Naive thymus-derived CD4-positive, alpha-beta T cell (primary cell): ENCODE measurements at regions of chr1 and their contacts with region 1.

Region 1: DNA sequence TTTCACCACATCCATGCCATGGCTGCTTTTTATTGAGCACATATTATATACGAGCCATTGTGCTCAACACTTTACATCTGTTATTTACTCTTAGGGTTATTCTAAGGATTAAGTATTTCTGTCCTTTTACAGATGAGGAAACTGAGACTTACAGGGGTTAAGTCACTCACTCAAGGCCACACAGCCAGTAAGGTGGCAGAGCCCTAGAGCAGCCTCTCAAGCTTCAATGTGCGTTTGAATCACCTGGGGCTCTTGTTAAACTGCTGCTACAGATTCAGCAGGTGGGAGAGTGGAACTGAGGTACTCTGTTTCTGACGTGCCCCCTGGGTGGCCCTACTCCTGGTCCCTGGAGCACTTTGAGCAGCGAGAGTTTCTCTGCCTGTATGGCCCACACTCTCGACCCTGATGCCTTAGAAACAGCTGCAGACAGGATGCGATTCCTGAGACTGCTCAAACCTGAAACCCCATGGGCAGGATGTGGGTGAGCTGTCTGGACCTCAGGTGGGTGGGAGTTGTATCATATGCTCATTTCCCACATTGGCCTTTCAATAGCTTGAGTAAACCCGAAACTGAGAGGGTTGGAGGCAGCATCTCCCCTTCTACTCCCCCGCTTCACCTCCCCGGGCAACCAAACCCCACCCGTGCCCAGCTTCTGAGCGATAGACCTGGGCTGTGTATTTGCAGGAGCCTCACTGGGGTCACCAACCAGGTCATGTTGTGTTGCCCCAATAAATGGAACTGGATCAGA is 59.3 kb downstream of the MAN1C1 start:
- DNase-seq: peak; percentile 24 to 91 (median 86)
- ATAC-seq: peak; percentile 89
- H3K4me3 ChIP-seq: peak overlapping the region; percentile 31
- H3K4me3 Mint-ChIP-seq: peak overlapping the region; percentile 80 to 92 (median 84)
- H3K27ac ChIP-seq: peak overlapping the region; percentile 67
- H3K27ac Mint-ChIP-seq: peak overlapping the region; percentile 70 to 98 (median 94)
- H3K4me1 ChIP-seq: peaks cover 34 to 89% of the 10 kb centered on the region in 2 donors
- H3K4me1 Mint-ChIP-seq: peaks cover 58 to 96% (median 94%) of the 10 kb centered on the region in 7 donors
- H3K27me3 ChIP-seq: no peaks in the 10 kb centered on the region
- H3K27me3 Mint-ChIP-seq: peaks cover 0 to 80% (median 0%) of the 10 kb centered on the region in 5 donors

Region 2: DNA sequence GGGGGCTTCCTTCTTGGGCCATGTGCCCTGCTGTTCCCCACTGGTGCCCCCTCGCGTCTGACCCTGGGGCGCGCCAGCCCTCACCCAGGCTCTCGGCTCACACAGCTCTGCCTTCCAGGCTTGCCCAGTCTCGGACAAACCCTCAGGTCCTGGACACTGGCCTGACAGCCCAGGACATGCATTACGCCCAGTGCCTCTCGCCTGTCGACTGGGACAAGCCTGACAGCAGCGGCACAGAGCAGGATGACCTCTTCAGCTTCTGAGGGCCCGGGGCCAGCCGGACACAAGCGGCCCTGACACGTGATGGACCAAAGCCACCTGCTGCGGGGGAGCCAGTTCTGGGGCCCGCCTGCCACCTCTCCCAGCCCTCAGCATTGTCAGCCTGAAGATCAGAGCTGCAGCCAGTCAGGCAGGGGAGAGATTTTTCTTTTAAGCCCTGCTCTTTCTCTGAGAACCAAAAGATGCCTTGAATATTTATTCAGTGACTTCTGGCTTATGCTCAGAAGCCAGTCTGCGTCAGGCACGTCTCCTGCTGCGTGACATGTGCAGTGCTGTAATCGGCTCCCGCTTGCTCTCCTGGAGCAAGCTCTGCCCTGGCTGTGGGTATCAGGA is 109.1 kb before region 1 on chr1:
- CTCF ChIA-PET with region 1: no interaction called
- POLR2A ChIA-PET with region 1: interaction called, 3 read pairs
- intact Hi-C with region 1: loop called in 1 of 2 experiments (anchors 1 kb)
- DNase-seq: peak in 4 of 9 donors; percentile 28 to 73 (median 50)
- ATAC-seq: peak; percentile 60
- H3K4me3 ChIP-seq: no peak overlapping the region
- H3K4me3 Mint-ChIP-seq: peak overlapping the region; percentile 74 to 100 (median 98)
- H3K27ac ChIP-seq: peak overlapping the region; percentile 83
- H3K27ac Mint-ChIP-seq: peak overlapping the region; percentile 72 to 98 (median 96)
- H3K4me1 ChIP-seq: peaks cover 39 to 40% of the 10 kb centered on the region in 2 donors
- H3K4me1 Mint-ChIP-seq: peaks cover 40 to 80% (median 68%) of the 10 kb centered on the region in 7 donors
- H3K27me3 ChIP-seq: no peaks in the 10 kb centered on the region
- H3K27me3 Mint-ChIP-seq: no peaks in the 10 kb centered on the region

Region 3: GRCh38 chr1:25642574-25643108 is 33.3 kb before region 1 on chr1:
- CTCF ChIA-PET with region 1: interaction called, 9 read pairs
- POLR2A ChIA-PET with region 1: interaction called, 37 read pairs
- intact Hi-C with region 1: loop called (anchors 1 kb)
- DNase-seq: peak; percentile 29 to 88 (median 84)
- ATAC-seq: peak; percentile 96
- H3K4me3 ChIP-seq: peak overlapping the region; percentile 53
- H3K4me3 Mint-ChIP-seq: peak overlapping the region; percentile 43 to 89 (median 72)
- H3K27ac ChIP-seq: peak overlapping the region; percentile 77
- H3K27ac Mint-ChIP-seq: peak overlapping the region; percentile 81 to 96 (median 92)
- H3K4me1 ChIP-seq: peaks cover 20 to 65% of the 10 kb centered on the region in 2 donors
- H3K4me1 Mint-ChIP-seq: peaks cover 54 to 96% (median 92%) of the 10 kb centered on the region in 7 donors
- H3K27me3 ChIP-seq: no peaks in the 10 kb centered on the region
- H3K27me3 Mint-ChIP-seq: peaks cover 0 to 85% (median 0%) of the 10 kb centered on the region in 5 donors

Region 4: DNA sequence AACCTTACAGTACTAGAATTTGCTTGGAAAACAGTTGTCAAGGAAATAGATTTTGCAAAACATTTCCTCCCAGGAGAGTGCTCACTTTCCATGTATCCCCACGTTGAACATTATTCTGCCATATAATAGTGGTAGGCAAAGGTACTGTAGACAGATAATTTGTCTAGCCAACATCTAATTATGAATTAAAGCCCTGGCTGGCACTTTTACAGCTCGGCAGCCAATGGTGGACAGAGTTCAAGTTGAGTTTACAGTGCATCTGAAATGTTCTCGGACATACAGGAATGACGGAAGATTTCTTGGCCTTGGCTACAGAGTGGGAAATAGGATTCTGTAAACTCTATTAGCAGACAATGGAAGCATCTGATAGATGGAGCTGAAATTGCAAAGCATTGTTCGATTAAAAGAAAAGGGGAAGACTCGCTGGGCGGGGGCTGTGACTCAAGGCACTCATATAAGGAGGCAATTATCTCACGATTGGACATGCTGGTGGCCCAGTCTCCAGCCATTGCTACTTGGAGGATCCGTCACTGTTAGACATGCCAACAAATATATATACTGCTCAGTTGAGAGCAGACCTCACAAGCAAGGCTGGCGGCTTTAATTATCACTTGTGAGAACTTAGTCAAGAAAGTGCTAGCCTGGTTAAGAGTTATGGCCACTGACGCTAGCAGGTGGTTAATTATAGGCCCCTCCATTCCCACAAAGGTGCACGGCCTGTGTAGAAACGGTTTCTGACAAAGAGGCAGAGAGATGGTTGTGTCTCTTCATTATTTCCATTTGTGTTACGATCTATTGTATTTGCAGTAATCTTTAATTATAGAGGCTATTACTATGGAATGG is 11.3 kb before region 1 on chr1:
- CTCF ChIA-PET with region 1: interaction called, 11 read pairs
- POLR2A ChIA-PET with region 1: interaction called, 30 read pairs
- intact Hi-C with region 1: loop called in 1 of 2 experiments (anchors 1 kb)
- DNase-seq: no peak
- ATAC-seq: no peak
- H3K4me3 ChIP-seq: no peak overlapping the region
- H3K4me3 Mint-ChIP-seq: no peak overlapping the region
- H3K27ac ChIP-seq: peak overlapping the region; percentile 39
- H3K27ac Mint-ChIP-seq: peak overlapping the region in 8 of 9 donors; percentile 43 to 98 (median 96)
- H3K4me1 ChIP-seq: peaks cover 0 to 41% of the 10 kb centered on the region in 2 donors
- H3K4me1 Mint-ChIP-seq: peaks cover 23 to 89% (median 85%) of the 10 kb centered on the region in 7 donors
- H3K27me3 ChIP-seq: no peaks in the 10 kb centered on the region
- H3K27me3 Mint-ChIP-seq: peaks cover 0 to 69% (median 0%) of the 10 kb centered on the region in 5 donors

Region 5: DNA sequence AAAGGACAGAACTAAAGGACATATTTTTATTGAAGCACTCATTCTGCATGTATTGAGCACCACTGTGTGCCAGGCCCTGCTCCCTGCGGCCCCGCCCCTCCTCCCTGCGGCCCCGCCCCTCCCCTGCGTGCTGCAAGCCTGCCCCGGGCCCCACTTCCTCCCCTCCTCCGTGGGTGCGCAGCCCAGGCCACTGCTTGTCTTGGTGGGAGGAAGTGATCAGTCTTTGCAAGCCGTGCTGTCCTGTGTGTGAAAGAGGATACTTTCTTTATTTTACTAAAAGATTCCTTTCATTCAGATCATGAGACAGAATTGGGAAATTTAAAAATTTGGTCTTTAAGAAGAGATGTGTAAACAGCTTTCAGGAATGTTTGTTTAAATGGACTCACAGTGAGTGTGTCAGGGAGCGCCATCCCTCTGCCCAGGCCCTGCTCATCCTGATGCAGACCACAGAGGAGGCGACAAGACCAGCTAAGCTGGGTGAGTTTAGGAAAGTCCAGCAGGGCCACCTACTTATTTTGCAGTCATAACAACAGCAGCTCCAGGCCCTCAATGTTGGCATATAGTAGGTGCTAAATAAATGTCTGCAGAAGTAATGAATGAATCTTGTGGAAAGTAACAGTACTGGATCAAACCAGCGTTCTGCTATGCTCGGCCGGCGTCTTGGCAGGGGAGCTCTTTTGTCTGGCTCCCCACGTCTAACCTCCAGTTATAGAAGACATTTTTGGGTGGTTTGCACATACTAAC is 35.8 kb after region 1 on chr1:
- CTCF ChIA-PET with region 1: interaction called, 3 read pairs
- POLR2A ChIA-PET with region 1: interaction called, 7 read pairs
- intact Hi-C with region 1: loop called (anchors 2 to 5 kb)
- DNase-seq: peak in 7 of 9 donors; percentile 32 to 55 (median 49)
- ATAC-seq: peak; percentile 93
- H3K4me3 ChIP-seq: no peak overlapping the region
- H3K4me3 Mint-ChIP-seq: peak overlapping the region; percentile 20 to 76 (median 72)
- H3K27ac ChIP-seq: peak overlapping the region; percentile 58
- H3K27ac Mint-ChIP-seq: peak overlapping the region in 8 of 9 donors; percentile 64 to 90 (median 84)
- H3K4me1 ChIP-seq: peaks cover 8 to 66% of the 10 kb centered on the region in 2 donors
- H3K4me1 Mint-ChIP-seq: peaks cover 28 to 94% (median 78%) of the 10 kb centered on the region in 7 donors
- H3K27me3 ChIP-seq: no peaks in the 10 kb centered on the region
- H3K27me3 Mint-ChIP-seq: peaks cover 0 to 12% (median 0%) of the 10 kb centered on the region in 5 donors

Region 6: DNA sequence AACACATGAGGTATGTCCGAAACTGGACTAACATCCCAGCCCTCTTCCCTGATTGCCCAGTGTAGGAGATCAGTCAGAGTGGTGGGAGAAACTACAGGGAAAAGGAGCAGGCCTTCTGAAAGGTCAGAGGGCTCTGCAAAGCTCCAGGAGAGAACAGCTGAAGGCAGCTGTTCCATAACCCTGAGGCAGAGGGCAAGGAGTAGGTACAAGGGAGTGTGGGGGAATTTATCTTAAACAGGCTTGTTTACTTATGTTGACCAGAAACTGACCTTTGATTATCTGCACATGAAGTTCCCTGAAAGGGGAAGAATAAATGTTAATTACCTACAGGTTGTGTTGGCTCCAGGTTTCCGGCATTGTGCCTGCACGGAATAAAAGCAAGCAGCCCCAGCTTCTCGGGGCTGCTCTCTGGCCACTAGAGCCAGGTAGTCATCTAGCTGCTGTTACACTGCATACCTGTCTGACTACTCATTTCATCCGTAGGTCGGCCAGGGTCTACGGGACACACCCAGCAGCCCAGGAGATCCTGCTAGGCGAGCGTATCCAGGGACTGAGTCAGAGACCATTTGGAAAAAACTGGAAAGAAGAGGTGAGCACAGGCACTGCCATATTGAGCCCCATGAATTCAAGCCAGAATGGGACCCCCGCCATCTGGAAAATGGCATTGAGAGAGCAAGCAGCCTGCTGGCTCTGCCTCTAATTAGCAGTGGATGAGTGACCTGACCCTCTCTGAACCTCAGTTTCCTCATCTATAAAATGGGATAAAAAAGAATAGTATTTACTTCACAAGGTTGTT is 214.5 kb after region 1 on chr1:
- CTCF ChIA-PET with region 1: no interaction called
- POLR2A ChIA-PET with region 1: no interaction called
- intact Hi-C with region 1: no loop called
- DNase-seq: no peak
- ATAC-seq: no peak
- H3K4me3 ChIP-seq: no peak overlapping the region
- H3K4me3 Mint-ChIP-seq: no peak overlapping the region
- H3K27ac ChIP-seq: no peak overlapping the region
- H3K27ac Mint-ChIP-seq: peak overlapping the region in 1 of 9 donors; percentile 12
- H3K4me1 ChIP-seq: peaks cover 0 to 4% of the 10 kb centered on the region in 2 donors
- H3K4me1 Mint-ChIP-seq: peaks cover 4 to 13% (median 5%) of the 10 kb centered on the region in 7 donors
- H3K27me3 ChIP-seq: no peaks in the 10 kb centered on the region
- H3K27me3 Mint-ChIP-seq: no peaks in the 10 kb centered on the region